ENCODE measurements at regions of chr5 and their contacts with region 1.

Region 1: GRCh38 chr5:159133041-159133741 is 33.5 kb upstream of the EBF1 start:
- DNase-seq: peak; percentile 3 to 45
- H3K4me3 ChIP-seq: no peak overlapping the region
- H3K27ac ChIP-seq: no peak overlapping the region
- H3K4me1 ChIP-seq: no peaks in the 10 kb centered on the region
- H3K27me3 ChIP-seq: peaks cover 32% of the 10 kb centered on the region
- CTCF ChIP-seq: peak; percentile 89

Region 2: GRCh38 chr5:157761690-157762621 is 1371.2 kb before region 1 on chr5:
- CTCF ChIA-PET with region 1: no interaction called
- POLR2A ChIA-PET with region 1: no interaction called
- intact Hi-C with region 1: loop called (anchors 1 kb)
- DNase-seq: peak in 1 of 2 experiments; percentile 30
- H3K4me3 ChIP-seq: no peak overlapping the region
- H3K27ac ChIP-seq: no peak overlapping the region
- H3K4me1 ChIP-seq: no peaks in the 10 kb centered on the region
- H3K27me3 ChIP-seq: no peaks in the 10 kb centered on the region
- CTCF ChIP-seq: peak; percentile 88

Region 3: GRCh38 chr5:158074992-158075769 is 1058.0 kb before region 1 on chr5:
- CTCF ChIA-PET with region 1: no interaction called
- POLR2A ChIA-PET with region 1: no interaction called
- intact Hi-C with region 1: loop called (anchors 2 kb)
- DNase-seq: peak in 1 of 2 experiments; percentile 39
- H3K4me3 ChIP-seq: no peak overlapping the region
- H3K27ac ChIP-seq: no peak overlapping the region
- H3K4me1 ChIP-seq: no peaks in the 10 kb centered on the region
- H3K27me3 ChIP-seq: peaks cover 3% of the 10 kb centered on the region; the same call in 1 of the 2 replicates
- CTCF ChIP-seq: peak; percentile 78

Region 4: GRCh38 chr5:158695595-158696330 is 437.4 kb before region 1 on chr5:
- CTCF ChIA-PET with region 1: interaction called, 8 read pairs
- POLR2A ChIA-PET with region 1: no interaction called
- intact Hi-C with region 1: loop called (anchors 1 kb)
- DNase-seq: peak; percentile 39 to 60
- H3K4me3 ChIP-seq: no peak overlapping the region
- H3K27ac ChIP-seq: no peak overlapping the region
- H3K4me1 ChIP-seq: no peaks in the 10 kb centered on the region
- H3K27me3 ChIP-seq: peaks cover 29% of the 10 kb centered on the region
- CTCF ChIP-seq: peak; percentile 97